ENCODE measurements at regions of chr11 and their contacts with region 1.

Region 1: DNA sequence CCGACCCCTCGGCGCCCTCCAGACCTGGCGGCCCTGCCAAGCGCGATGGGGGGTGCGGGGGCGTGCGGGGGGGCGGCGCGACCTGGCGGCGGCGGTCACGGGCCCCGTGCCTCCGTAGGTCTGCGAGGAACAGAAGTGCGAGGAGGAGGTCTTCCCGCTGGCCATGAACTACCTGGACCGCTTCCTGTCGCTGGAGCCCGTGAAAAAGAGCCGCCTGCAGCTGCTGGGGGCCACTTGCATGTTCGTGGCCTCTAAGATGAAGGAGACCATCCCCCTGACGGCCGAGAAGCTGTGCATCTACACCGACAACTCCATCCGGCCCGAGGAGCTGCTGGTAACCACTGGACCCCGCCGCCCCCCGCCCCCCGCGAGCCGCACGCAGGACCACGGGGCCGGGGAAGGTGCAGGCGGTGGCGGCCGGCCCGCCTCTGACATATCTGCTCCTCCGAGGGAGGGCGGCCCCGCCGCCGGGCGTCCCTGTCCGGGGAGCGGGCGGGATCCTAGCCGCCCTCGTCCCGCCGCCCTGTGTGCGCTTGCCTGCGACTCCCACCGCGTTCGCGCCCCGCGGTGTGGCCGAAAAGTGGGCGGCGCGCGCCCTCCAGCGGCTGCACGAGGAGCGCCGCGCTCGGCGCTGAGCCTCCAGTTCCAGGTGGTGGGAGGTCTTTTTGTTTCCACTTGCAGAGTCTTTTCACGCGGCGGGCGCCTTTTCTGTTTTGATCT is 2.1 kb downstream of the CCND1 start:
- DNase-seq: peak; percentile 71
- H3K4me3 ChIP-seq: peak overlapping the region; percentile 59 to 100 (median 98)
- H3K27ac ChIP-seq: peak overlapping the region; percentile 62
- H3K4me1 ChIP-seq: peaks cover 28% of the 10 kb centered on the region
- H3K27me3 ChIP-seq: no peaks in the 10 kb centered on the region
- CTCF ChIP-seq: peak; percentile 77 to 90

Region 2: DNA sequence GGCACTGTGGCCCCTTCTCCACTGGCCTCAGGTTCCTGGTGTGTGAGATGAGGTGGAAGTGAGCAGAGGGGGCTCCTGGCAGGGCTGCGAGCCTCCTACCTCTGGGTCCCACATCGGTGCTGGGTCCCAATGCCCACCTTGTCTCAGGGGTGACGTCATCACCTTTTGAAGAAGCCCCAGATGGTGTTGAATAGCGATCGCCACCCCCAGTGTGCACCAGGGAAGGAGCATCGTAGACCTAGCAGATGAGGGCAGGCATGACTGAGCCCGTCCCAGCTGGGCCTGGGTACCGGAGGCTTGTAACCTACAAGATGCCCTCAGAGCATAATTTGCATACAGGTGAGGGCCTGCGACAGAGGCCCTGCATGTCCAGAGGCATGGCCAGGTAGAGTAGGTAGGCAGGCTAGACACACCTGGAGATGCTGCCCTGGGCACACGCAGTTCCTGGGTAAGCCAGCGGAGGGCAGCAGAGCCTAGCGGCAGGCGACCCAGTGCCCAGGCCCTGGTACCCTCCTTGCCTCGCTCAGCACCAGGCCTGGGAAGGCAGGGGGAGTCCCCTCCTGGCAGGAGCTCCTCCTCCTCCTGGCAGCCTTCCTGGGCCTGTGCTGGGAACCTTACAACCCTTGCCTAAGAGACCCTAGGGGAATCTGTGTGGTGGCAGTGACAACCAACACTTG is 541.8 kb before region 1 on chr11:
- CTCF ChIA-PET with region 1: interaction called, 4 read pairs
- dilution Hi-C with region 1: no loop called
- in situ Hi-C with region 1: no loop called
- intact Hi-C with region 1: loop called (anchors 1 kb)
- DNase-seq: peak; percentile 74
- H3K4me3 ChIP-seq: no peak overlapping the region
- H3K27ac ChIP-seq: no peak overlapping the region
- H3K4me1 ChIP-seq: peaks cover 3% of the 10 kb centered on the region
- H3K27me3 ChIP-seq: no peaks in the 10 kb centered on the region
- CTCF ChIP-seq: peak; percentile 97 to 100

Region 3: DNA sequence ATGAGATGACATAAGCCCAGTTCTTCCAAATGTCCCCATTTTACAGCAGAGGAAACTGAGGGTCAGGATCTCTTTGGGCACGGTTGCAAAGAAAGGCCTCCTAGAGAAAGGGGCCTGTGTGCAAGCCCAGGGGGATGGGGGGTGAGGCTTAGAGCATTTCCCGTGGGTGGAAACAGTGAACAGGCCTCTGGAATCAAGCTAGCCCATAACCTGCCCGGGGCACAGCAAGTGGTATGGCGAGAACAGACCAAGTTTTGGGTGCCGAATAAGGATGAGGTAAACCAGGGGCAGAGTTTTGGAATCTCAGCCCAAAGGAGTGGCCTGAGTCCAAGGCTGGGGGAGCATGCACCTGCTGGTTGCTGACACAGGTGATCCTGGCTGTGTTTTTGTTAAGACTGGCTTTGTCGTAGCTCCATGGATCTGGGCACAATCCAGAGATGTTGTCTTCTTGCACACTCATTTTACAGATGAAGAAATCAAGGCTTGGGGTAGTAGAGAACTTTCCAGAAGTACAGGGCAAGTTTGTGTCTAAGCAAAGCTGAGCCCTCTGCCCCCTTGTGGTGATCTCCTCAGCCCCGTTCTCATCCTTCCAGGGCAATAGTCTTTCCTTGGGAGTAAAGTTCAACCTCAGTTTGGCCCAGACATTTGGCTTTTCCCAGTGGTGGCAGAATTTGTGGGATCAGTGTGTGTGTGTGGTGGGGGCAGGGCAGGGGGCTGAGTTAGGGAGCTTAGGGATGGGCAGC is 402.6 kb before region 1 on chr11:
- CTCF ChIA-PET with region 1: no interaction called
- dilution Hi-C with region 1: no loop called
- in situ Hi-C with region 1: no loop called
- intact Hi-C with region 1: loop called (anchors 1 kb)
- DNase-seq: peak; percentile 10
- H3K4me3 ChIP-seq: no peak overlapping the region
- H3K27ac ChIP-seq: no peak overlapping the region
- H3K4me1 ChIP-seq: no peaks in the 10 kb centered on the region
- H3K27me3 ChIP-seq: no peaks in the 10 kb centered on the region
- CTCF ChIP-seq: peak; percentile 45 to 65

Region 4: GRCh38 chr11:69436973-69437875 is 205.8 kb before region 1 on chr11:
- CTCF ChIA-PET with region 1: no interaction called
- dilution Hi-C with region 1: no loop called
- in situ Hi-C with region 1: loop called in 1 of 2 experiments (anchors 25 kb)
- intact Hi-C with region 1: loop called (anchors 1 kb)
- DNase-seq: peak; percentile 82
- H3K4me3 ChIP-seq: no peak overlapping the region
- H3K27ac ChIP-seq: peak overlapping the region; percentile 60
- H3K4me1 ChIP-seq: peaks cover 47% of the 10 kb centered on the region
- H3K27me3 ChIP-seq: no peaks in the 10 kb centered on the region
- CTCF ChIP-seq: peak in 1 of 2 donors; percentile 30

Region 5: GRCh38 chr11:69524282-69524911 is 118.7 kb before region 1 on chr11:
- CTCF ChIA-PET with region 1: no interaction called
- dilution Hi-C with region 1: no loop called
- in situ Hi-C with region 1: no loop called
- intact Hi-C with region 1: loop called (anchors 2 kb)
- DNase-seq: peak; percentile 78
- H3K4me3 ChIP-seq: peak overlapping the region in 1 of 3 experiments; percentile 15
- H3K27ac ChIP-seq: peak overlapping the region; percentile 28
- H3K4me1 ChIP-seq: peaks cover 22% of the 10 kb centered on the region
- H3K27me3 ChIP-seq: no peaks in the 10 kb centered on the region
- CTCF ChIP-seq: no peak

Region 6: DNA sequence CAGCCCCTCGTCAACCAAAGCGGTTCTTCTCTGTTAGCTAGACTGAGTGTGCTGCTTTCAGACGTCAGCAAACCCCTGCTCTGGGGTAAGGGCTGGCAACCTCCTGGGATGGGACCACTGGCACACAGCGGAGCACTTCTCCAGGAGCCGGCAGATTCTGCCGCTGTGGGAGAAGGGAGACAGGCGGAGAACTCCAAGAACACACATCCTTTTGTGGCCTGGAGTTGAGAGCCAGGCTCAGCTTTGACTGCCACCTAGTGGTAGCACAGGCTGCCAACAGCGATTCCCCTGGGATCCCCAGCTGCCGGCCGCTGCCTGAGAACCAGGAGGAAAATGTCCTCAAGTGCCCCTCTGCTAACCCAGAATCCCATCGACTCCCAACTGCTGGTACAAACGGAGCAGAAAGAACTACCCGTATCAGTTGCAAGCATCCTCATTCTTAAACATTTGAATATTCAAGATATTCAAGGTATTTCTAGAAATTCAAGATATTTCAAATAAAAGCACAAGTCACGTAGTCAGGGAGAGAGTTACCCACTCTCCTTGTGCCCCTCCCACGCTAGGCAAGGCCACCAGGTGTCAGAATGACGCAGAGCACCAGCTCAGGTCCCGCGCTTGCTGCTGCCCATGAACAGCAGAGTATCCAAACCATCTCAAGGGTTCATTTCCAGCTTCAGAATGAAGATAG is 27.2 kb after region 1 on chr11:
- CTCF ChIA-PET with region 1: no interaction called
- dilution Hi-C with region 1: no loop called
- in situ Hi-C with region 1: no loop called
- intact Hi-C with region 1: loop called (anchors 1 kb)
- DNase-seq: peak; percentile 63
- H3K4me3 ChIP-seq: no peak overlapping the region
- H3K27ac ChIP-seq: no peak overlapping the region
- H3K4me1 ChIP-seq: peaks cover 19% of the 10 kb centered on the region
- H3K27me3 ChIP-seq: no peaks in the 10 kb centered on the region
- CTCF ChIP-seq: peak; percentile 98 to 99